Caco-2 (cell line): ENCODE measurements at regions of chr5 and their contacts with region 1.

Region 1: GRCh38 chr5:3139499-3139931 is 388.0 kb upstream of the IRX2 start:
- DNase-seq: no peak
- H3K4me3 ChIP-seq: no peak overlapping the region
- H3K4me3 Mint-ChIP-seq: no peak overlapping the region
- H3K27ac Mint-ChIP-seq: no peak overlapping the region
- H3K4me1 ChIP-seq: no peaks in the 10 kb centered on the region
- H3K4me1 Mint-ChIP-seq: no peaks in the 10 kb centered on the region
- H3K27me3 ChIP-seq: no peaks in the 10 kb centered on the region
- H3K27me3 Mint-ChIP-seq: no peaks in the 10 kb centered on the region
- CTCF ChIP-seq: no peak

Region 2: DNA sequence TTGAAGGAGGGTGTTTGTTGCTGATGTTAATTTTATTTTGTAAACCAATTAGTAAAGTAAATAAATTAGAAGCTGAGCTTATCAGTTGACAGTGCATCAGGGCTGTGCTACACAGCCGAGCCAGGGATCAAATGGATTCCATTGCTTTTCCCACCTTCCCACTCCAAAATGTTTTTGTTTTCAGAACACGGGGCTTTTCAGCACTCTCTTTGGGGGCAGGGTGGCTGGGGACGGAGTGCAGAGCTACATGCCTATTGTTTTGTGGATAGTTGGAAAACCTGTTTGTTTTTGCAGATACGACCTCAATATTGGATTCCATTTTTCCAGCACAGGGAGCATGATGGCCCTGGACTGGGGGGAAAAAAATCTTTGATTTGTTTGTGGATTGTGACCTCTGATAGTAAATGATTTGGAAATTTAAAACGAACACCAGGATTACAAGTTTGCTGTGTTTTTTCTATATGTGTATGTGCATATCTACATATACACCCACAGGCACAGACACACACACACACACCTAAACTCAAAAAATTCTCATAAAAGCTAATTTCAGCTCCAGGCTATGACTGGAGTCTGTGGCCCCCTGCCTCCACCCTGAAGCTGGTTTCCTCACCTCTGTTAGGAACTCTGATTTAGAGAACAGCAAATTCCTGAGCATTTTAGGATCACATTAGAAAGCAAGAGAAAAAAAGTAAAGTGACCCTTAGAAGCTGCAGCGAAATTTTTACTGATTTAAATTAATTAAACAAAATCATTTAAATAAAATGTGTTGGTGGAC is 16.3 kb before region 1 on chr5:
- CTCF ChIA-PET with region 1: no interaction called
- POLR2A ChIA-PET with region 1: no interaction called
- intact Hi-C with region 1: loop called (anchors 1 kb)
- DNase-seq: no peak
- H3K4me3 ChIP-seq: no peak overlapping the region
- H3K4me3 Mint-ChIP-seq: no peak overlapping the region
- H3K27ac Mint-ChIP-seq: no peak overlapping the region
- H3K4me1 ChIP-seq: no peaks in the 10 kb centered on the region
- H3K4me1 Mint-ChIP-seq: no peaks in the 10 kb centered on the region
- H3K27me3 ChIP-seq: no peaks in the 10 kb centered on the region
- H3K27me3 Mint-ChIP-seq: no peaks in the 10 kb centered on the region
- CTCF ChIP-seq: no peak

Region 3: DNA sequence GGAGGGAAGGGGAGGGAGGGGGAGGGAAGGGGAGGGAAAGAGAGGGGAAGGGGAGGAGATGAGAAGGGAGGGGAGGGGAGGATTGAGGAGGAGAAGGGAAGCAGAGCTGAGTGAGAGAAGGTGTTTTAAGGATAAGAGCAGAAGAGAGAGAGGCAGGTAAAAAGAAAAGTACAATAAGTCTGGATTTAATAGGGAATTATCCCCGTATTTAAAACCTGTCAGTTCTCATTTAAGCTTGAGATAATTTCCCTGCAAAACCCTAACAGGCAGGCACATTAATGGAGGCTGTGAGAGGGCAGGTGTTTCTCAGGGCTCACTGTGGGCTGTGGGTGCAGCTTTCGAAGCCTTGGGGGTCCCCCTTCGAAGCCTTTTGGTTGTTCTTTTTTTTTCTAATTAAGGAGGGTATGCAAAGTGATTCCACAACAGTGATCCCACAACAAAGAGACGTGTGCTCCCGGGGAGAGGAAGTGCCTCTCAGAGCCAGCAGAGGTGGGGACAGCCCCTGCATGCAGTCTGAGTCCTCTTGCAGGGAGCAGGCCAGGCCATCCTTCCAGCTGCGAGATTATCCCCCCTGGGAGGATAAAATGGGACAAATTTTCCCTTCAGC is 138.2 kb after region 1 on chr5:
- CTCF ChIA-PET with region 1: no interaction called
- POLR2A ChIA-PET with region 1: no interaction called
- intact Hi-C with region 1: no loop called
- DNase-seq: no peak
- H3K4me3 ChIP-seq: no peak overlapping the region
- H3K4me3 Mint-ChIP-seq: no peak overlapping the region
- H3K27ac Mint-ChIP-seq: no peak overlapping the region
- H3K4me1 ChIP-seq: no peaks in the 10 kb centered on the region
- H3K4me1 Mint-ChIP-seq: no peaks in the 10 kb centered on the region
- H3K27me3 ChIP-seq: no peaks in the 10 kb centered on the region
- H3K27me3 Mint-ChIP-seq: no peaks in the 10 kb centered on the region
- CTCF ChIP-seq: no peak